Heart right ventricle (tissue), 16 donors: ENCODE measurements at regions of chr15 and their contacts with region 1.

Region 1: DNA sequence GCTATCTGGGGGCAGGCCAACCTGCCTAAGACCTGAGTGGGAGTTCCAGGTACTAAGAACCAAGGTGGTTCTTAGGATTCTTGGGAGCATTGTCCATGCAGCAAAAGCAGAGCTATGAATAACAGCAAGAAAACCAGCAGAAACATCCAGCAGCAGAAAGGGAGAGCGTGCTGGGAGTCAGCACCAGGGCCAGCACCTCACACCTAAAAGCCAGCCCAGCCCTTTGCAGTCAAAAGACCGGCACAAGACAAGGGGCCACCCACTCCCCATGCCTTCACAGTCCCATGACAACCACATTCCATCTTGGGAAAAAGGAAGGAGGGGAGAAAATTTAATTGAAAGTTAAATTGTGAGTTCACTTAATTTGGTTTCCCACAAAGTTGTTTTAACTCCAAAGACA is 364.9 kb downstream of the AGBL1 start:
- DNase-seq: no peak
- ATAC-seq: no peak
- H3K4me3 ChIP-seq: no peak overlapping the region
- H3K27ac ChIP-seq: no peak overlapping the region
- H3K4me1 ChIP-seq: no peaks in the 10 kb centered on the region
- H3K27me3 ChIP-seq: peaks cover 0 to 11% (median 0%) of the 10 kb centered on the region in 7 donors
- CTCF ChIP-seq: no peak

Region 2: GRCh38 chr15:86384186-86384585 is 60.3 kb before region 1 on chr15:
- intact Hi-C with region 1: loop called in 1 of 10 experiments (anchors 10 kb)
- DNase-seq: no peak
- ATAC-seq: no peak
- H3K4me3 ChIP-seq: no peak overlapping the region
- H3K27ac ChIP-seq: no peak overlapping the region
- H3K4me1 ChIP-seq: no peaks in the 10 kb centered on the region
- H3K27me3 ChIP-seq: peaks cover 0 to 23% (median 0%) of the 10 kb centered on the region in 7 donors
- CTCF ChIP-seq: no peak

Region 3: DNA sequence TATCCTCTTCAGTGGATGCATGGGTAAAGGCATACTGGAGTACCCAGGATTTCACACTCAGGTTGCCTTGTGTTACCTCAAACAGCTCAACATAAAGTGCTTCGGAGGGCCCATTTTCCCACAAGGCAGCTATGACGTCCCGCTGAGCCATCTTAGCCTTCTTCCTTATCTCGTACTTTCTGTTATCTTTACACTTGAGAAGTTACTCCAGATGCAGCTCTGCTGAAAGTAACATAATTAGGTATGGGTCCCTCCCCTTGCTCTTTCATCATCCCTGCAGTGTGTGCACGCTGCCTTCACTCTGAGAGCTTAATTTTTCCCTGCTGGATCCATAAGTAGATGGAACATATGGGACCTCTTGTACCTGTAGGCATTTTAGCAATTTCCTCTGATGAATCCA is 45.5 kb after region 1 on chr15:
- intact Hi-C with region 1: loop called in 1 of 10 experiments (anchors 10 kb)
- DNase-seq: no peak
- ATAC-seq: no peak
- H3K4me3 ChIP-seq: no peak overlapping the region
- H3K27ac ChIP-seq: no peak overlapping the region
- H3K4me1 ChIP-seq: no peaks in the 10 kb centered on the region
- H3K27me3 ChIP-seq: peaks cover 0 to 7% (median 0%) of the 10 kb centered on the region in 7 donors
- CTCF ChIP-seq: no peak